Spleen (tissue), 13 donors: ENCODE measurements at regions of chr11 and their contacts with region 1.

Region 1: GRCh38 chr11:8911029-8911826 is at the start of gene AKIP1:
- DNase-seq: peak; percentile 95
- H3K4me3 ChIP-seq: peak within 1 kb of the TSS; percentile 54 to 94 (median 86)
- H3K27ac ChIP-seq: peak within 1 kb of the TSS; percentile 81 to 94 (median 88)
- H3K4me1 ChIP-seq: peaks cover 10 to 89% (median 38%) of the 10 kb centered on the region in 6 donors
- H3K27me3 ChIP-seq: no peaks in the 10 kb centered on the region
- CTCF ChIP-seq: peak in 1 of 11 experiments; percentile 12
- POLR2A ChIP-seq: peak in 1 of 3 donors; percentile 64
- total RNA-seq, gene AKIP1: 17.7 to 33.6 (median 26.6) TPM

Region 2: DNA sequence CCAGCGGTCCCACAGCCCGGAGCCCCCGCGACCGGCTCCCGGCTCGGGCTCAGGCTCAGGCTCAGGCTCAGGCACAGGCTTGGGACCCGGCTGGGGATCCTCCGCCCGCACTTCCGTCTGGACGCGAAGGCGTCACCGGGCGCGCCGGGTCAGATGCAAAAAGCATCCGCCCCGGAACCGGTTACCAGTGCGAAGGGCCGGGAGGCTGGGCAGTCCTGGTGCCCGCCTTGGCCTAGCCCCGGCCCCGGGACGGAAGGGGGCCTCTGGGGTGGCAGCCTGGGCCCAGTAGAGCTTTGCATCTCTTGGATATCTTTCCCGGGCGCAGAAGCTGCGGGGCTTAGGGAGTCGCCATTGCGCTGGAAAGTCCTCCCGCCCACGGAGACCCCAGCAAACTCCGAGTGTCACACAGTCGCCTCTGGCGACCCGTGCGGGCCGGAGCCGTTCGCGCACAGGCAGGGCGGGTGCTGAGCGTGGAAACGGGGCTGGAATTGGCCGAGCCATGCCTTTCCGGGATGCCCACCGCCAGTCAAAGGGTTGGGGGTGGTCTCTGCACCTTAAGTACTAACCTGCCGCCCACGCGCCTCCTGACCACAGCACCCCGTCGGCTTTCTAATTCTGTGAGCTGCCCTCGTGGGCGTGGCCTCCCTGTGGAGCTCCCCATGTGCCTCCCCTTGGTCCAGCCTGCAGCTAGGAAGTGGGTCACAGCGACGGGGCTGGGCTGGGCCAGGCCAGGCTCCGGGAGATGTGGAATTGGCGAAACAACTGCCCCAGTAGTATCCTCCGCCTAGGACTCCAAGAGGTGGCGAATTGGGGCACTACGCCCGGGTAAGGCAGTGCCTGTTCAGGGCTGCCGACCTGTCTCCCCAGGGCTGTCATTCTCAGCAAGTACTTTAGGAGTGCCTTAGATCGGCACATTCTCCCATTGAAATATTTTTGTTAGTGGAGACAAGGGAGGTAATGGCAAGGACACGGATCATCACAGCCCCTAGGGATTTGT is 53.4 kb after region 1 on chr11 and contains the start of gene TMEM9B:
- intact Hi-C with region 1: loop called (anchors 5 kb)
- DNase-seq: peak; percentile 98
- H3K4me3 ChIP-seq: peak within 1 kb of the TSS; percentile 74 to 97 (median 82)
- H3K27ac ChIP-seq: peak within 1 kb of the TSS; percentile 94 to 99 (median 97)
- H3K4me1 ChIP-seq: peaks cover 23 to 57% (median 43%) of the 10 kb centered on the region in 6 donors
- H3K27me3 ChIP-seq: no peaks in the 10 kb centered on the region
- CTCF ChIP-seq: no peak
- POLR2A ChIP-seq: peak; percentile 43 to 90 (median 51)
- total RNA-seq, gene TMEM9B: 31.5 to 56.5 (median 46.0) TPM